Activated CD4-positive, alpha-beta memory T cell treated with anti-CD3 and anti-CD28 coated beads for 36 hours (primary cell): ENCODE measurements at regions of chr7 and their contacts with region 1.

Region 1: DNA sequence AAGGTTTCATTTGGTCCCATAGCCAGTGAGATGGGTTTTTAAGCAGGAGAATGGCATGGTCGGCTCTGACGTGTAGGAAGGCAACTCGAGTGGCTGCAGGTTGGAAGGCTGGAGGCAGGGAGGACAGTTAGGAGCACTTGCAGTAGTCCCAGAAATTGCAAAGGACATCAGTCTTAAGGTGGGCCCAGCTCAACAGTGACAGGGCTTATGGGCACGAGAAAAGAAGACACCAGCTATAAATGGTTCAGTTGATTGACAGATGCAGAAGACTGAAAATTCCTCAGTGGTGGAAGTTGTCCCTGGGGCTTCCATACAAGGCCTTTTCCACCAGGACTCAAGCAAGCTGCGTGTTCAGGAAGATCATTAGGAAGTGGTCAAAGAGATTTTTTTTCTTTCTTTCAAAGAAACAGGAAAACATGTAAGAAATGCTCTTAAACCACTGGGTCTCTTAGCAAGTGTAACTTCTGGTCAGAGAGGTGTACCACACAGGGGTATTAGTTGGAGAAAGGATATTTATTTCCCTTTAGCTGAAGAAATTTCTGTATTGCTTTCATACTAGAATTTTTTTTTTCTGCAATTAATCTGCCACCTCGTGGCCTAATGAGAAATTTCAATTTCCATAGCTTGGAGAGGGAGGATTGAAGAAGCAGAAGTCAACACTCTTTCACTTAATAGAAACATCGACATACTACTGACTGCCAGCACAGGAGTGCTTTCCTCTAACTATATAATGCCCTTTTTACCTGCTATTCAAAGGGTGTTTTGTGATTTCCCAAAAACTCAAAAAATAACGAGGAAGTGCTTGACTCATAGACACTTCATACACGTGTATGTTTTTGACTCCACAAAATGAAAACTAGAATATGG is 177.4 kb upstream of the NAMPT start:
- DNase-seq: no peak
- H3K4me3 Mint-ChIP-seq: no peak overlapping the region
- H3K27ac Mint-ChIP-seq: peak overlapping the region; percentile 7
- H3K4me1 Mint-ChIP-seq: peaks cover 25% of the 10 kb centered on the region
- H3K27me3 Mint-ChIP-seq: no peaks in the 10 kb centered on the region

Region 2: DNA sequence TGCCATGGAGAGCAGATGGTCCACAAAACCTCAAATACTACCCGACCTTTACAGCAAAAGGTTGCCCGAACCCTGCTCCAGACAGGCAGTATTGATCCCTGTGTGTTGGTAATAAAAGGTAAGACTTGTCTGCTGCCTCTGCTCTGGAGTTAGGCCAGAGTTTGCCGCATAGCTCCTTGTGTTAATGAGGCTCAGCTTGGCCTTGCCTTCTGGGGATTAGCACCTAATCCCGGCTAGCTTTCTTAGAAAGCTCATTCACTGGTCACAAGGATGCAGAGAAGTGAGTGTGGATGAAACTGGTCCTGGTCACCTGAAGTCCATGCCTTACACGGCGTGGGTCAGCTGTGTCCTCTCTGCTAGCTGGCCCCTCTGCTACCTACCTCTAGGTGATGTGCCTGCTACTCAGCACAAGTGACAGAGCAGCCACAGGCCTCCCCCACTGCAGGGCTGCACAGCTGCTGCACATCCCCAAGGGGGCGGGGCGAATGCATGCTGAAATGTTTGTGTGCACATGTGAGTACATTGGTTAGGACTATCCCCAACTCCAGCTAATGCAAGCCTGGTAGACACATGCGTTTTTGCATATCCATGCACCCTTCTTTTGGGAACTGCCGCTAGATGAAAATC is 318.4 kb before region 1 on chr7:
- CTCF ChIA-PET with region 1: no interaction called
- POLR2A ChIA-PET with region 1: no interaction called
- intact Hi-C with region 1: no loop called
- DNase-seq: peak; percentile 14
- H3K4me3 Mint-ChIP-seq: no peak overlapping the region
- H3K27ac Mint-ChIP-seq: no peak overlapping the region
- H3K4me1 Mint-ChIP-seq: no peaks in the 10 kb centered on the region
- H3K27me3 Mint-ChIP-seq: no peaks in the 10 kb centered on the region

Region 3: DNA sequence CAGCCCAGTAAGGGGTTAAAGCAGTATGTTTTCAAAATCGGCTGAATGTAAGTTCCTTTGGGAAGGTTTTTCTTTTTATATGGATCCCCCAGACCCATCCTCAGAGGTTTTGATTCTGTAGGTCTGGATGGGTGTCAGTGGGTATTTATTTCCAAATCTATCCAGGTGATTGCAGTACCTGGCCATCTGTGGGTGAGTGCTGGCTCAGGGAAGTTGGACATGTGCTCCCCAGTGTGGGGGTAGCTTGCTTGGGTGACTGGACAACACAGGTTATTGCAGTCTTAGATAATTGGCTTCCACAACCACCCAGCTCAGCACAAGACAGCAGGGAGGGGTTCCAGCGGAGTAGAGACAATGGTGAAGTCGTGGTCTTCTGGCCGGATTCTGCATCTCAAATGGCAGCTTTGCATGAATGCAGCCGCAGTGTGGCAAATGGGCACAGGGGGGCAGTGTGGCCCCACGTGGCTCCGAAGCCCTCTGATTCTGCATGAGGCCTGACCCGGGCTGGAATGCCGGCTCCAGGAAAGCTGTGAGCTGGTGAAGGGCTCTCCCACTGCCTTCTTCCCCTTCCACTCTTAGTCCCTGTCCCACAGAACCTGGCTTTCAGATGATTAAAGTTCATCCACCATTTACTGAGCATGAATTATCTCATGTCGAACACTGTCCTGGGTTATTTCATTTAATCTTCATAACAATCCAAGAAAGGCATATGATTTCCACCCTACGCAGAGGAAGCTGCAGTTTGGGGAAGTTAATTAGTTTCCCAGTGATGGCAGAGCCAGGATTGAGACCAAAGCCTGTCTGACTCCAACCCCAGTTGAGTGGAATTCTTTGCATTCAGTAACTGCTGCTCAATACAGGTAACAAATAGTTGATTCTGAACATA is 285.6 kb before region 1 on chr7:
- CTCF ChIA-PET with region 1: interaction called, 184 read pairs
- POLR2A ChIA-PET with region 1: interaction called, 4 read pairs
- intact Hi-C with region 1: loop called (anchors 1 kb)
- DNase-seq: peak; percentile 80
- H3K4me3 Mint-ChIP-seq: no peak overlapping the region
- H3K27ac Mint-ChIP-seq: no peak overlapping the region
- H3K4me1 Mint-ChIP-seq: peaks cover 5% of the 10 kb centered on the region
- H3K27me3 Mint-ChIP-seq: peaks cover 13% of the 10 kb centered on the region

Region 4: DNA sequence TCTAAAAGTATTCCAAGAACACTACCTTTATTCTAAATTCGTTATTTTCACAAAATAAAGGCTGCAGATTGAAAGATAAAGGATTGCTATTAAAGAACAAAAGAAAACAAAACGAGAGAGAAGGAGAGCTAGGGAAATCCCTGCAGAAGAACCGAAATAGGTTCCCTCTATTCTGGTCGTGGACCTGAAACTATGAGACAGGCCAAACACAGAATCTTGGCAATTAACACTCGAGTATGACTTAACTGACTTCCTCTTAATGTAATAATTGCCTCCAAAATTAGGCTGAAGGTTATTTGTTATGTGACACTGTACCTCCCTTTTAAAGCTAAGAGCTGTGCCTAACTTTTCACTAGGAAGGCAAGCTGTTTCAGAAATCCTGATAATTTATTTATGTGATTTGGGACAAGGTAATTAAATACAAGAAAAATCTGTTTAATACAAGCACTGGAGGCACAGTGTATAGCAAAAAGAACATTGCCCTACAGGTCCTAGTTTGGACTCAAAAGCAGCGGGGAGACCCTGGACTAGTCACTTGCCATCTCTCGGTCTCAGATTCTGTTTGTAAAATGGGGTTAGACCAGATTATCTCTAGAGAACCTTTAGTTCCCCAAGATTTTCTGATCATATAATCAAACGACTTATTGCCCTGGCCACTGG is 189.1 kb before region 1 on chr7:
- CTCF ChIA-PET with region 1: interaction called, 11 read pairs
- POLR2A ChIA-PET with region 1: no interaction called
- intact Hi-C with region 1: no loop called
- DNase-seq: no peak
- H3K4me3 Mint-ChIP-seq: no peak overlapping the region
- H3K27ac Mint-ChIP-seq: peak overlapping the region; percentile 13
- H3K4me1 Mint-ChIP-seq: peaks cover 35% of the 10 kb centered on the region
- H3K27me3 Mint-ChIP-seq: no peaks in the 10 kb centered on the region

Region 5: GRCh38 chr7:106329971-106330733 is 132.1 kb before region 1 on chr7:
- CTCF ChIA-PET with region 1: interaction called, 11 read pairs
- POLR2A ChIA-PET with region 1: no interaction called
- intact Hi-C with region 1: no loop called
- DNase-seq: peak; percentile 31
- H3K4me3 Mint-ChIP-seq: no peak overlapping the region
- H3K27ac Mint-ChIP-seq: peak overlapping the region; percentile 57
- H3K4me1 Mint-ChIP-seq: peaks cover 25% of the 10 kb centered on the region
- H3K27me3 Mint-ChIP-seq: peaks cover 10% of the 10 kb centered on the region

Region 6: DNA sequence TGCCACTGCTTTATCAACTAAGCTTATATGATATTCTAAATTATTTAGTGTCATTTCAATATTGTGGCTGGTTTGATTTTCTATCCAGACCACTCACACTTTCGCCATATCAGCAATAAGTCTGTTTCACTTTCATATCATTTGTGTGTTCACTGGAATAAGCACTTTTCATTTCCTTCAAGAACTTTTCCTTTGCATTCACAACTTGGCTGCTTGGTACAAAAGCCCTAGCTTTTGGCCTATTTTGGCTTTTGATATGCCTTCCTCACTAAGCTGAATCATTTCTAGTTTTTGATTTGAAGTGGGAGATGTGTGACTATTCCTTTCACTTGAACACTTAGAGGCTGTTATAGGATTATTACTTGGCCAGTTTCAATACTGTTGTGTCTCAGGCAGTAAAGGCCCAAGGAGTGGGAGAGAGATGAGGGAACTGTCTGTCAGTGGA is 56.5 kb before region 1 on chr7:
- CTCF ChIA-PET with region 1: interaction called, 4 read pairs
- POLR2A ChIA-PET with region 1: interaction called, 5 read pairs
- intact Hi-C with region 1: loop called (anchors 2 kb)
- DNase-seq: peak; percentile 48
- H3K4me3 Mint-ChIP-seq: peak overlapping the region; percentile 1
- H3K27ac Mint-ChIP-seq: peak overlapping the region; percentile 19
- H3K4me1 Mint-ChIP-seq: peaks cover 31% of the 10 kb centered on the region
- H3K27me3 Mint-ChIP-seq: peaks cover 10% of the 10 kb centered on the region

Region 7: GRCh38 chr7:106485031-106485551 is 22.9 kb after region 1 on chr7:
- CTCF ChIA-PET with region 1: interaction called, 21 read pairs
- POLR2A ChIA-PET with region 1: interaction called, 3 read pairs
- intact Hi-C with region 1: no loop called
- DNase-seq: peak; percentile 22
- H3K4me3 Mint-ChIP-seq: no peak overlapping the region
- H3K27ac Mint-ChIP-seq: peak overlapping the region; percentile 78
- H3K4me1 Mint-ChIP-seq: peaks cover 58% of the 10 kb centered on the region
- H3K27me3 Mint-ChIP-seq: peaks cover 18% of the 10 kb centered on the region

Region 8: GRCh38 chr7:106514881-106515280 is 52.7 kb after region 1 on chr7:
- CTCF ChIA-PET with region 1: no interaction called
- POLR2A ChIA-PET with region 1: no interaction called
- intact Hi-C with region 1: no loop called
- DNase-seq: no peak
- H3K4me3 Mint-ChIP-seq: no peak overlapping the region
- H3K27ac Mint-ChIP-seq: no peak overlapping the region
- H3K4me1 Mint-ChIP-seq: peaks cover 6% of the 10 kb centered on the region
- H3K27me3 Mint-ChIP-seq: peaks cover 20% of the 10 kb centered on the region